K562 (cell line): ENCODE measurements at regions of chr19 and their contacts with region 1.

Region 1: GRCh38 chr19:4139614-4140236 is 13.7 kb upstream of the CREB3L3 start:
- DNase-seq: peak; percentile 82 to 86 (median 84)
- ATAC-seq: peak; percentile 98
- H3K4me3 ChIP-seq: no peak overlapping the region
- H3K27ac ChIP-seq: no peak overlapping the region
- H3K4me1 ChIP-seq: peaks cover 0 to 12% of the 10 kb centered on the region in 2 experiments; a peak in 2 of 5 replicates
- H3K27me3 ChIP-seq: no peaks in the 10 kb centered on the region; a peak in 1 of 5 replicates
- CTCF ChIP-seq: peak; percentile 92 to 94 (median 93)
- EP300 ChIP-seq: no peak
- POLR2A ChIP-seq: no peak
- RAD21 ChIP-seq: peak; percentile 40 to 66

Region 2: DNA sequence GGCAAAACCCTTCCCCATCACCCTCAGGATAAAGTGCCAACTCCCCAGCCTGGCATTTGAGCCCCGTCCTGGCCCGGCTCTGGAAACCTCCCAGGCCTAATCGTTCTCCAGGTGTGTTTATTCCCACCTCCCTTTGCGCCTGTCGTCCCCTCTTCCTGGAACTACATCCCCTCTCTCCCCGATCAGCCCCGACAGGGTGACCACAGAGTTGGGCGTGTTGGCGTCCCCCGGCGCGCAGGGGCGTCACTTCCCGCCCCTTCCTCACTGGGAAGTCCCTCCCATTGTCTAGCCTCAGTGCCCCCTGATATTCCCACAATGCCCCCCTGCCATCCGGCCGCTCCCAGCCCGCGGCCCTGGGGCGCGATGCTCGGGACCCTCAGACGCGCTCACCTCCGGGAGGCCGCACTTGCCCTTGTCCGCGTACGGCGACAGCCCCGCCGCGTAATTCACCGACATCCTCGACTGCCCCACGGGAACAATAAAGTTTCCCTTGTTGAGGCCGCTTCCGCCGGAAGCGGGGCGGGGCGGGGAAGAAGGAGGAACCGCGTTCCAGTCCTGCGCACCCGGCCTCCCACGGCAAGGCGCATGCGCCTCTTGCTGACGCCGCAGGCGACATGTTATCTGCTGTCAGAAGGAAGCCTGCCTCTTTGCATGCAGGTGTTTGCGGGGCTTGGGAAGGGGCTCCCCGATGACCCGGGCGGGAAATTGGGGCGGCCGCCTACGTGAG is 42.5 kb after region 1 on chr19 and contains the starts of genes ANKRD24 and SIRT6:
- CTCF ChIA-PET with region 1: no interaction called
- POLR2A ChIA-PET with region 1: interaction called, 3 read pairs
- in situ Hi-C with region 1: no loop called
- intact Hi-C with region 1: loop called (anchors 1 kb)
- DNase-seq: peak; percentile 98 to 99 (median 99)
- ATAC-seq: peak; percentile 83
- H3K4me3 ChIP-seq: peak within 1 kb of the TSS; percentile 84
- H3K27ac ChIP-seq: peak within 1 kb of the TSS; percentile 73
- H3K4me1 ChIP-seq: peaks cover 17 to 49% of the 10 kb centered on the region in 2 experiments
- H3K27me3 ChIP-seq: no peaks in the 10 kb centered on the region
- CTCF ChIP-seq: no peak
- EP300 ChIP-seq: peak; percentile 68
- POLR2A ChIP-seq: peak; percentile 79
- RAD21 ChIP-seq: no peak
- polyA plus RNA-seq, gene ANKRD24: not detected
- polyA plus RNA-seq, gene SIRT6: 1.4 to 1.8 TPM

Region 3: GRCh38 chr19:4208385-4209094 is 68.8 kb after region 1 on chr19:
- CTCF ChIA-PET with region 1: interaction called, 4 read pairs
- POLR2A ChIA-PET with region 1: no interaction called
- in situ Hi-C with region 1: no loop called
- intact Hi-C with region 1: loop called (anchors 1 kb)
- DNase-seq: peak in 3 of 4 experiments; percentile 55 to 59 (median 58)
- ATAC-seq: no peak
- H3K4me3 ChIP-seq: no peak overlapping the region
- H3K27ac ChIP-seq: no peak overlapping the region
- H3K4me1 ChIP-seq: peaks cover 5 to 28% of the 10 kb centered on the region in 2 experiments; a peak in 4 of 5 replicates
- H3K27me3 ChIP-seq: peaks cover 7 to 20% of the 10 kb centered on the region in 2 experiments; a peak in 3 of 5 replicates
- CTCF ChIP-seq: peak; percentile 20 to 35 (median 29); a peak in 2 of 6 replicates
- EP300 ChIP-seq: no peak
- POLR2A ChIP-seq: no peak
- RAD21 ChIP-seq: 0 out of 4 replicates have a peak, but pooled peaks of 1 of the 2 experiments have one; percentile 6